Posterior cingulate gyrus (tissue), 11 donors: ENCODE measurements at regions of chr13 and their contacts with region 1.

Region 1: GRCh38 chr13:76886292-76887075 is at the start of gene KCTD12:
- DNase-seq: peak; percentile 54 to 96 (median 68)

Region 2: DNA sequence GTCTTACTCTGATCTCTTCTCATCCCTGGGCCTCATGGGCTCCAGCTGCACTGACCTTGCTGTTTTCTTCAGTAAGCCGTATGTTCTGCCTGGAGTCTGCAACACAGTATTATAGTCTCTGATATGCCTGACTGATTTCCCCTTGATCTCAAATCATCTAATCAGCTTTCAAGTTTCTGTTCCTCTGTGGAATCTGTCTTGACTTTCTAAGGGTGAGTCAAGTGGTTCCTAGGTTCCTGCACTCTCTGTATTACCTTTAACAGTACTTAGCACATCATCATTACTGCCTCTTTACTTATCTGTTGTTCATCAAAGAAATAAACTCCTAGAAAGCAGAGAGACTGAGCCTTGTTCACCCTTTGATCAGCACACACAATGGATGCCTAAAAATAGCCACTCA is 899.7 kb before region 1 on chr13:
- intact Hi-C with region 1: no loop called
- DNase-seq: no peak

Region 3: GRCh38 chr13:76822698-76823267 is 63.7 kb before region 1 on chr13:
- intact Hi-C with region 1: loop called (anchors 10 kb)
- DNase-seq: no peak